Activated naive CD4-positive, alpha-beta T cell treated with anti-CD3 and anti-CD28 coated beads for 36 hours (primary cell): ENCODE measurements at regions of chr6 and their contacts with region 1.

Region 1: DNA sequence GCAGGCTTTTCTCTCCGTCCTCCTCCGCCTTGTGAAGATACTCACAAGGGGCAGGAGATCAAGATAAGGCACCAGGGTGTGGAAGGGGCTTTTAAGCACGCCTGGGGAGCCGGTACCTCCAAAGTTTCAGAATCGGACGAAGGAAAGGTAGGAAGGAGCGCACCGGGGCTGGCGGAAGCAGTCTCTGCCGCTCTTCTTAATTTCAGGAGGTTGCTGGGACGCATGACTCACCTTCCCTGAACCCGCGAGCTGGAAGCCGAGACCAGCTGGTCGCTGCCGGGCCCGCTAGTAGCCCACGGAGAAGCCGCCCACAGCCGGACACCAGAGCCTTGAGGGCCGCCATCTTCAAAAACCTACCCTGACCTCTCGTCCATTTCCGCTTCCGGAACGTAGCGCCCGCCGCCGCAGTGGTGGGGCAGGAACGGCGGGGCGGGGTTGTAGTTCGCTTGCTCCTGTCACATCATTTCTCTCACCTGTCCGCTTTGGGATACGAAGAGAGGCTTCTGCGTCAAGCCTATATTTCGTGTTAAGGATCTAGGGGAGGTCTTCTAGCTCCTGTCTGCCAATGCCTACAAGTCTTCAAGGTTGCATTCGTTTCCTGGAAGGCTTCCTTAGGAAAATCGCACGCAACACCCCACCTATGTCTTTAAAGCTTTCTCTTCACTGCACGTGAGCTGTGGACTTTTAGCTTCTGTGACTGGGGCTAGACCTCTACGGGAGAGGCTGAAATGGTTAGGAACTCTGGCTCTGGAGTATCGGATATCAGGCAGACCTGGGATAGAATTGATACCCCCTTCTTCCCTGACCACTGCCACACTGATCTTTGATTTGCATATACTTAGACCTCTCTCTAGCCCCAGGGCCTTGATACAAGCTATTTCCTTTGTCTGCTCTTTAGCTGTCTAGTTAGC is at the start of gene MRPS18A:
- DNase-seq: peak; percentile 90
- H3K4me3 Mint-ChIP-seq: peak within 1 kb of the TSS; percentile 92
- H3K27ac Mint-ChIP-seq: peak within 1 kb of the TSS; percentile 81
- H3K4me1 Mint-ChIP-seq: peaks cover 42% of the 10 kb centered on the region
- H3K27me3 Mint-ChIP-seq: peaks cover 3% of the 10 kb centered on the region
- total RNA-seq, gene MRPS18A: 47.8 to 50.2 TPM

Region 2: DNA sequence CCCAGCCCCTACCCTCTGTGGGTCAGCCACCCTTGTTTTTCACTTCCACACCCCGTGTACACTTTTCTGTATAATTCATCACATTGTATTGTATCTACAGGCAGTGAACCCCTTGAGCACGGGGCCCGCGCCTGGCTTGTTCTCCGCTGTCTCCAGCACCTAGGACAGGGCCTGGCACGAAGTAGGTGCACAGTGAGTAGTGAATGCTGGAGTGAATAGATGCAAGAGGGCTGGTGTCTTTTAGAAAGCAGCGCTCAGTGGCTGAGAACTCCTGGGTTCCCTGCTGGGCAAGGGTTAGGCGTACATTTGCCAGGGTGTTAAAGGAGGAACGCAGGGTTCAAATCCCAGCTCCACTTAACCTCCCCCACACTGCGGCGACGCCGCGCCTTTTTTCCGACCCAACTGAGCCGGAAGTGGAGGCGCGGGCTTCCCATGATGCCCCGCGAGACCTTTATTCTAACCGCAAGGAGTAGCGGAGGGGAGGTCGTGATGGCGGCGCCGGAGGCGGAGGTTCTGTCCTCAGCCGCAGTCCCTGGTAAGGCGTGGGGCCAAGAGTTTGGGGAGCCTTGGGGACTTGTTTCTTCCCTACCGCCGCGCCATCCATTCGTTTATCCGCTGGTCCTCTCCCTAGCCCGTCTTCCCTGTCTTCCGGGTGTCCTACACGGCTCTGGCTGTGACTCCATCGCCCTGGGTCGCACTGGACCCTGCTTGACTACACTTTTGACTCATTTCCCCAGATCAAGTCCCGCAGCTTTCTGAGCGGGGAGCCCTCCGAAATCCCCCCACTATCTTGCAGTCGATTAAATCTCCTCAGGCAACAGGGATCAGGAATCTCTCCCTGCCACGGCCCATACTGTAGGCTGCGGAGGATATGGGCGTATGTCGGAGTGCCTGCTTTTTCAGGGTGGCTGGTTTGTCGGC is 52.0 kb before region 1 on chr6 and contains the start of gene MAD2L1BP:
- CTCF ChIA-PET with region 1: no interaction called
- intact Hi-C with region 1: loop called (anchors 2 kb)
- DNase-seq: peak; percentile 93
- H3K4me3 Mint-ChIP-seq: peak within 1 kb of the TSS; percentile 91
- H3K27ac Mint-ChIP-seq: peak within 1 kb of the TSS; percentile 95
- H3K4me1 Mint-ChIP-seq: peaks cover 46% of the 10 kb centered on the region
- H3K27me3 Mint-ChIP-seq: no peaks in the 10 kb centered on the region
- total RNA-seq, gene MAD2L1BP: 19.8 to 22.7 TPM

Region 3: GRCh38 chr6:43667245-43668150 is 20.2 kb before region 1 on chr6:
- CTCF ChIA-PET with region 1: interaction called, 8 read pairs
- intact Hi-C with region 1: loop called (anchors 1 kb)
- DNase-seq: peak; percentile 90
- H3K4me3 Mint-ChIP-seq: peak overlapping the region; percentile 5
- H3K27ac Mint-ChIP-seq: peak overlapping the region; percentile 65
- H3K4me1 Mint-ChIP-seq: peaks cover 22% of the 10 kb centered on the region
- H3K27me3 Mint-ChIP-seq: no peaks in the 10 kb centered on the region

Region 4: GRCh38 chr6:43733471-43734293 is 46.0 kb after region 1 on chr6:
- CTCF ChIA-PET with region 1: interaction called, 5 read pairs
- intact Hi-C with region 1: loop called (anchors 2 kb)
- DNase-seq: peak; percentile 87
- H3K4me3 Mint-ChIP-seq: no peak overlapping the region
- H3K27ac Mint-ChIP-seq: peak overlapping the region; percentile 83
- H3K4me1 Mint-ChIP-seq: peaks cover 21% of the 10 kb centered on the region
- H3K27me3 Mint-ChIP-seq: no peaks in the 10 kb centered on the region